CD4-positive, alpha-beta memory T cell (primary cell): ENCODE measurements at regions of chr6 and their contacts with region 1.

Region 1: GRCh38 chr6:132218059-132218696 is 183.1 kb downstream of the MOXD1 start:
- DNase-seq: no peak
- H3K4me3 ChIP-seq: no peak overlapping the region
- H3K4me3 Mint-ChIP-seq: no peak overlapping the region
- H3K27ac ChIP-seq: no peak overlapping the region
- H3K27ac Mint-ChIP-seq: no peak overlapping the region
- H3K4me1 ChIP-seq: no peaks in the 10 kb centered on the region
- H3K4me1 Mint-ChIP-seq: no peaks in the 10 kb centered on the region
- H3K27me3 ChIP-seq: no peaks in the 10 kb centered on the region
- H3K27me3 Mint-ChIP-seq: peaks cover 3 to 5% of the 10 kb centered on the region in 2 donors

Region 2: GRCh38 chr6:131914967-131915751 is 303.0 kb before region 1 on chr6:
- CTCF ChIA-PET with region 1: interaction called, 7 read pairs
- POLR2A ChIA-PET with region 1: no interaction called
- intact Hi-C with region 1: loop called (anchors 1 kb)
- DNase-seq: peak; percentile 37 to 57 (median 44)
- H3K4me3 ChIP-seq: no peak overlapping the region
- H3K4me3 Mint-ChIP-seq: peak overlapping the region in 1 of 8 donors; percentile 13
- H3K27ac ChIP-seq: no peak overlapping the region
- H3K27ac Mint-ChIP-seq: no peak overlapping the region
- H3K4me1 ChIP-seq: peaks cover 7% of the 10 kb centered on the region
- H3K4me1 Mint-ChIP-seq: peaks cover 13 to 35% (median 17%) of the 10 kb centered on the region in 4 donors
- H3K27me3 ChIP-seq: no peaks in the 10 kb centered on the region
- H3K27me3 Mint-ChIP-seq: peaks cover 37 to 50% of the 10 kb centered on the region in 2 donors

Region 3: DNA sequence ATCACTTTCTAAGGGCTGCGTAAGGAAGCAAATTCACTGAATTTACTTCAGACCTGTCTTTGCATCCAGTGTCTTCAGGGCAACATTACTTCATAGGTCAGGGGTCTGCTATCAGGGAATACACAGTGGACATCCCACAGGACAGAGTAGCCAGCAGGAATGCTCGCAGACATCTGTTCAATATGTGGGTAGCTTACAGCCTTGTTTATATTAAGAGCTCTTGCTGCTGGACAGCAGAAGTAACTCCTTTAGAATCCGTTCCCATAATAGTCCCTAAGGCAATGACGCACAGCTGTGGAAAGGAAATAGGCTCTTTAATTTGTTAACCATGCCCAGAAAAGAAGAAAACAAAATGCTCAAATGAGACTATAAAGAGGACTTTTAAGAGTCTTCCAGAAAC is 15.6 kb before region 1 on chr6:
- CTCF ChIA-PET with region 1: no interaction called
- POLR2A ChIA-PET with region 1: no interaction called
- intact Hi-C with region 1: no loop called
- DNase-seq: no peak
- H3K4me3 ChIP-seq: no peak overlapping the region
- H3K4me3 Mint-ChIP-seq: no peak overlapping the region
- H3K27ac ChIP-seq: no peak overlapping the region
- H3K27ac Mint-ChIP-seq: no peak overlapping the region
- H3K4me1 ChIP-seq: no peaks in the 10 kb centered on the region
- H3K4me1 Mint-ChIP-seq: no peaks in the 10 kb centered on the region
- H3K27me3 ChIP-seq: no peaks in the 10 kb centered on the region
- H3K27me3 Mint-ChIP-seq: peaks cover 0 to 2% of the 10 kb centered on the region in 2 donors